H1 (cell line): ENCODE measurements at regions of chr6 and their contacts with region 1.

Region 1: GRCh38 chr6:114390176-114390575 is 47.4 kb upstream of the HS3ST5 start:
- DNase-seq: no peak
- H3K4me3 ChIP-seq: no peak overlapping the region
- H3K27ac ChIP-seq: no peak overlapping the region
- H3K4me1 ChIP-seq: peaks cover 3 to 17% (median 4%) of the 10 kb centered on the region in 4 experiments; a peak in 4 of 7 replicates
- H3K27me3 ChIP-seq: no peaks in the 10 kb centered on the region
- CTCF ChIP-seq: no peak
- EP300 ChIP-seq: no peak
- POLR2A ChIP-seq: no peak
- RAD21 ChIP-seq: no peak

Region 2: GRCh38 chr6:114108119-114109002 is 281.8 kb before region 1 on chr6:
- CTCF ChIA-PET with region 1: no interaction called
- POLR2A ChIA-PET with region 1: no interaction called
- DNase-seq: peak in 1 of 2 experiments; percentile 87
- H3K4me3 ChIP-seq: no peak overlapping the region
- H3K27ac ChIP-seq: no peak overlapping the region
- H3K4me1 ChIP-seq: no peaks in the 10 kb centered on the region
- H3K27me3 ChIP-seq: no peaks in the 10 kb centered on the region
- CTCF ChIP-seq: peak; percentile 47 to 76 (median 73)
- EP300 ChIP-seq: no peak
- POLR2A ChIP-seq: no peak
- RAD21 ChIP-seq: peak; percentile 69 to 79

Region 3: GRCh38 chr6:114304304-114304887 is 85.8 kb before region 1 on chr6:
- CTCF ChIA-PET with region 1: no interaction called
- POLR2A ChIA-PET with region 1: no interaction called
- DNase-seq: no peak
- H3K4me3 ChIP-seq: no peak overlapping the region
- H3K27ac ChIP-seq: no peak overlapping the region
- H3K4me1 ChIP-seq: no peaks in the 10 kb centered on the region
- H3K27me3 ChIP-seq: peaks cover 0 to 1% (median 0%) of the 10 kb centered on the region in 4 experiments; a peak in 1 of 7 replicates
- CTCF ChIP-seq: peak in 1 of 3 experiments; percentile 18; a peak in 2 of 4 replicates
- EP300 ChIP-seq: no peak
- POLR2A ChIP-seq: no peak
- RAD21 ChIP-seq: peak; percentile 7 to 13; a peak in 1 of 4 replicates

Region 4: GRCh38 chr6:114334237-114334636 is 55.9 kb before region 1 on chr6:
- CTCF ChIA-PET with region 1: no interaction called
- POLR2A ChIA-PET with region 1: no interaction called
- DNase-seq: no peak
- H3K4me3 ChIP-seq: no peak overlapping the region
- H3K27ac ChIP-seq: no peak overlapping the region
- H3K4me1 ChIP-seq: peaks cover 0 to 12% (median 9%) of the 10 kb centered on the region in 4 experiments; a peak in 4 of 7 replicates
- H3K27me3 ChIP-seq: no peaks in the 10 kb centered on the region
- CTCF ChIP-seq: no peak
- EP300 ChIP-seq: no peak
- POLR2A ChIP-seq: no peak
- RAD21 ChIP-seq: no peak

Region 5: GRCh38 chr6:114376611-114377175 is 13.5 kb before region 1 on chr6:
- CTCF ChIA-PET with region 1: interaction called, 3 read pairs
- POLR2A ChIA-PET with region 1: interaction called, 10 read pairs
- DNase-seq: no peak
- H3K4me3 ChIP-seq: no peak overlapping the region
- H3K27ac ChIP-seq: no peak overlapping the region
- H3K4me1 ChIP-seq: peaks cover 0 to 9% (median 4%) of the 10 kb centered on the region in 4 experiments; a peak in 2 of 7 replicates
- H3K27me3 ChIP-seq: no peaks in the 10 kb centered on the region
- CTCF ChIP-seq: no peak
- EP300 ChIP-seq: no peak
- POLR2A ChIP-seq: no peak
- RAD21 ChIP-seq: no peak

Region 6: DNA sequence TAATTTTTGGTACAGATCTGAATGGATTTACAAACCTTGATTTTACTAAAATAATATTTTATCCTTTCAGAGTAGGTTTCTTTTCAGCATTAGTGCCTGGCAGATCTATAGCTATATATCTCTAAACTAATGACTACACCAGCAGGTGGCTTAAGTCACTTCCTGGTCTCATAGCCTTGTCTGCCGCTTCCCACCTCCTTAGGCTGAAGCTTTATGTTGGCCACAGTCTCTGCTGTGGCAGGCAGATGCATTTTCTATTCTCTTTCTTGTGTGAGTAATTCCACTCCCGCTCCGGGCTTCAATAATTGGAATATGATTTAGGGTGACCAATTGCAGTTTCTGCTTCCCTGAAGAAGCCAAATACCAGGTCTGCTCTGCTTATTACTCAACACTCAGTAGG is 179.5 kb after region 1 on chr6:
- CTCF ChIA-PET with region 1: no interaction called
- POLR2A ChIA-PET with region 1: no interaction called
- DNase-seq: no peak
- H3K4me3 ChIP-seq: no peak overlapping the region
- H3K27ac ChIP-seq: no peak overlapping the region
- H3K4me1 ChIP-seq: peaks cover 2 to 8% (median 5%) of the 10 kb centered on the region in 4 experiments; a peak in 3 of 7 replicates
- H3K27me3 ChIP-seq: peaks cover 0 to 1% (median 0%) of the 10 kb centered on the region in 4 experiments; a peak in 2 of 7 replicates
- CTCF ChIP-seq: no peak
- EP300 ChIP-seq: no peak
- POLR2A ChIP-seq: no peak
- RAD21 ChIP-seq: peak in 1 of 2 experiments; percentile 18; a peak in 1 of 4 replicates